GM12878 (cell line): ENCODE measurements at regions of chr11 and their contacts with region 1.

Region 1: GRCh38 chr11:61315260-61315659 is 17.6 kb downstream of the DDB1 start:
- DNase-seq: no peak
- ATAC-seq: no peak
- H3K4me3 ChIP-seq: no peak overlapping the region
- H3K27ac ChIP-seq: no peak overlapping the region
- H3K4me1 ChIP-seq: no peaks in the 10 kb centered on the region
- H3K27me3 ChIP-seq: no peaks in the 10 kb centered on the region
- CTCF ChIP-seq: no peak
- EP300 ChIP-seq: no peak
- POLR2A ChIP-seq: no peak
- RAD21 ChIP-seq: no peak

Region 2: GRCh38 chr11:61266602-61267001 is 48.7 kb before region 1 on chr11:
- CTCF ChIA-PET with region 1: no interaction called
- POLR2A ChIA-PET with region 1: no interaction called
- RAD21 ChIA-PET with region 1: no interaction called
- SMC1A ChIA-PET with region 1: no interaction called
- in situ Hi-C with region 1: no loop called
- intact Hi-C with region 1: no loop called
- DNase-seq: no peak
- ATAC-seq: no peak
- H3K4me3 ChIP-seq: no peak overlapping the region
- H3K27ac ChIP-seq: no peak overlapping the region
- H3K4me1 ChIP-seq: no peaks in the 10 kb centered on the region
- H3K27me3 ChIP-seq: no peaks in the 10 kb centered on the region
- CTCF ChIP-seq: no peak
- EP300 ChIP-seq: no peak
- POLR2A ChIP-seq: no peak
- RAD21 ChIP-seq: no peak

Region 3: GRCh38 chr11:62409831-62410230 is 1094.6 kb after region 1 on chr11:
- CTCF ChIA-PET with region 1: no interaction called
- POLR2A ChIA-PET with region 1: interaction called, 11 read pairs
- RAD21 ChIA-PET with region 1: no interaction called
- SMC1A ChIA-PET with region 1: no interaction called
- in situ Hi-C with region 1: no loop called
- intact Hi-C with region 1: no loop called
- DNase-seq: no peak
- ATAC-seq: no peak
- H3K4me3 ChIP-seq: no peak overlapping the region
- H3K27ac ChIP-seq: no peak overlapping the region
- H3K4me1 ChIP-seq: no peaks in the 10 kb centered on the region
- H3K27me3 ChIP-seq: peaks cover 0 to 1% of the 10 kb centered on the region in 2 experiments; a peak in 3 of 4 replicates
- CTCF ChIP-seq: no peak
- EP300 ChIP-seq: no peak
- POLR2A ChIP-seq: no peak
- RAD21 ChIP-seq: no peak